ENCODE measurements at regions of chr14 and their contacts with region 1.

Region 1: DNA sequence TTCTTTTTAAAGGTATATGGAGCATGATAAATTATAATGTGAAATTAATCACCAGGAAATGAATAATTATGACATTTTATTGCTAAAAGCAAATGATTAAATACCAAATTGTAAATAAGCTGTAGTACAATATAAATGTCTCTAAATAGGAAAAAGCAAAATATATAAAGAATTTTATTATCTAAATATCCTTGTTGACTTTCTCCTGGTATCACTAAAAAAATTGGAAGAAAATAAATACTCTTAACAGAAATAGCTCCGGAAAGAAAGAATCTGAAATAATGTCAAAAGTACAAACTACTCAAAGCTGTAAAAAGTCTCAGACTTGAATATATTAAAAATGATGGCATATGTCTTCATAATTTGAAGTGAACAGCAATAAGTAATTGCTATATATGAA is at the start of gene OR11H7:
- DNase-seq: no peak
- ATAC-seq: no peak
- H3K4me3 ChIP-seq: no peak within 1 kb of the TSS
- H3K27ac ChIP-seq: no peak within 1 kb of the TSS
- H3K4me1 ChIP-seq: no peaks in the 10 kb centered on the region
- H3K27me3 ChIP-seq: no peaks in the 10 kb centered on the region
- CTCF ChIP-seq: no peak
- EP300 ChIP-seq: no peak
- POLR2A ChIP-seq: no peak
- RAD21 ChIP-seq: no peak
- polyA plus RNA-seq, gene OR11H7: 0.10 TPM in 1 of 2 experiments, not detected in the other

Region 2: GRCh38 chr14:20112321-20112720 is 116.4 kb before region 1 on chr14:
- CTCF ChIA-PET with region 1: no interaction called
- POLR2A ChIA-PET with region 1: no interaction called
- RAD21 ChIA-PET with region 1: no interaction called
- SMC1A ChIA-PET with region 1: no interaction called
- in situ Hi-C with region 1: no loop called
- intact Hi-C with region 1: no loop called
- DNase-seq: no peak
- ATAC-seq: peak; percentile 71
- H3K4me3 ChIP-seq: no peak overlapping the region
- H3K27ac ChIP-seq: no peak overlapping the region
- H3K4me1 ChIP-seq: no peaks in the 10 kb centered on the region
- H3K27me3 ChIP-seq: no peaks in the 10 kb centered on the region
- CTCF ChIP-seq: no peak
- EP300 ChIP-seq: no peak
- POLR2A ChIP-seq: no peak
- RAD21 ChIP-seq: no peak

Region 3: DNA sequence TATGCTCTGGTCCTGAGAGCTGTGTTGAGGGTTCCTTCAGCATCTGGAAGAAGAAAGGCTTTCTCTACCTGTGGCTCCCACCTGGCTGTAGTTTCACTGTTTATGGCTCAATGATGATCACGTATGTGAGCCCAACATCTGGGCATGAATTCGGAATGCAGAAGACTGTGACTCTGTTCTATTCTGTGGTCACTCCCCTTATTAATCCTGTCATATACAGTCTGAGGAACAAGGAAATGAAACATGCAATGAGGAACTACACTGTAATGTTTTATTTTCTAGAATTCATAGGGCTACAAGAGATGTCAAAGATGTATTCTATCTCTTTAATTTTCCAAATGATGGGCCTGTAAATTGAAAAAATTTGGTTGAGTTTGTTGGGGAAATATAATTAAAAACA is 48.8 kb before region 1 on chr14:
- CTCF ChIA-PET with region 1: no interaction called
- POLR2A ChIA-PET with region 1: no interaction called
- RAD21 ChIA-PET with region 1: no interaction called
- SMC1A ChIA-PET with region 1: no interaction called
- in situ Hi-C with region 1: loop called (anchors 5 kb)
- intact Hi-C with region 1: no loop called
- DNase-seq: no peak
- ATAC-seq: no peak
- H3K4me3 ChIP-seq: no peak overlapping the region
- H3K27ac ChIP-seq: no peak overlapping the region
- H3K4me1 ChIP-seq: no peaks in the 10 kb centered on the region
- H3K27me3 ChIP-seq: no peaks in the 10 kb centered on the region; a peak in 1 of 4 replicates
- CTCF ChIP-seq: no peak
- EP300 ChIP-seq: no peak
- POLR2A ChIP-seq: no peak
- RAD21 ChIP-seq: no peak

Region 4: DNA sequence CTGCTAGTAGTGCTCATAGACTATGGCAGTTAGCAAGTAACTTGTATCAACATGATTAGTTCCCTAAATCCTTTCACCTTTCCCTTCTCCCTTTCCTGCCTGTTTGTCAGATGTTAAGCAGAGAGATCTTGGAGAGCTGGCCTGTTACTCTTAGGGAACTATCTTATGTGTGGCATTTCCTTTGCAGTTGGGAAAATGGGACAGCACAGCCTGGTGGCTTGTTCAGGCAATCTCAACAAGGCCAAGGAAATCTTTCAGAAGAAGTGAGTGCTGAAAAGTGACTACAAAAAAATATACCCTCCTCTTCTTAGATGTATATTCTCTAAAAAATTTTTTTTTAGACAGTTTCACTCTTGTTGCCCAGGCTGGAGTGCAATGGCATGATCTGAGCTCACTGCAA is 122.2 kb after region 1 on chr14:
- CTCF ChIA-PET with region 1: no interaction called
- POLR2A ChIA-PET with region 1: no interaction called
- RAD21 ChIA-PET with region 1: no interaction called
- SMC1A ChIA-PET with region 1: no interaction called
- in situ Hi-C with region 1: no loop called
- intact Hi-C with region 1: no loop called
- DNase-seq: no peak
- ATAC-seq: no peak
- H3K4me3 ChIP-seq: no peak overlapping the region
- H3K27ac ChIP-seq: no peak overlapping the region
- H3K4me1 ChIP-seq: no peaks in the 10 kb centered on the region
- H3K27me3 ChIP-seq: no peaks in the 10 kb centered on the region
- CTCF ChIP-seq: peak in 2 of 3 experiments; percentile 16; a peak in 2 of 6 replicates
- EP300 ChIP-seq: no peak
- POLR2A ChIP-seq: no peak
- RAD21 ChIP-seq: no peak

Measured in GM12878 (cell line).